Adrenal gland (tissue), 19 donors: ENCODE measurements at regions of chr2 and their contacts with region 1.

Region 1: DNA sequence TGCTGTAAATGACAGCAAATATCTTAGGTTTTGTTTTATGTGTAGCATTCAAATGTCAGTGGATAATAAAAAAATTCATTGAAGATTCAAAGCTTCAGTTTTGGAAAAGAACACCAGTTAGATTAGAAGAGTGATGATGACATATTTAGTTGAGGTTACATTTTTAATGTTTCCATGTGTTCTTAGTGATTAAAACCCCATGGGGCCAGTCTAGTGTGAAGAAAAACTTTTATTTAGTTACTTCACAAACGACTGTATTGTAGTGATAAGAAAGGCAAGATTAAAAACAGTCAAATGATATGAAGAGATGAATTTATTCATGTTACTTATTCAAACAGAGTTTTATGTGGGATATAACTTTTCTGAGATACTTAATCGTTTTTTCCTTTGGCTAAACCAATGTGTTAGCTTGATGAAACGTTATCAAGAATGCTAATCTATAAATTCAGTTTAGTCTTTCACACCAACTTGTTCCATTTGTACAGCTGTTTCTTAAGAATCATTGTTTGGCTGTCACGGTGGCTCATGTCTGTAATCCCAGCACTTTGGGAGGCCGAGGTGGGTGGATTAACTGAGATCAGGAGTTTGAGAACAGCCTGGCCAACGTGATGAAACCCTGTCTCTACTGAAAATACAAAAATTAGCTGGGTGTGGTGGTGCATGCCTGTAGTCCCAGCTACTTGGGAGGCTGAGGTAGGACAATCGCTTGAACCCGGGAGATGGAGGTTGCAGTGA is 11.6 kb downstream of the BMPR2 start:
- DNase-seq: no peak
- H3K4me3 ChIP-seq: no peak overlapping the region
- H3K27ac ChIP-seq: peak overlapping the region in 1 of 5 donors; percentile 12
- H3K4me1 ChIP-seq: peaks cover 8 to 36% of the 10 kb centered on the region in 2 donors
- H3K27me3 ChIP-seq: no peaks in the 10 kb centered on the region
- CTCF ChIP-seq: no peak
- POLR2A ChIP-seq: no peak

Region 2: DNA sequence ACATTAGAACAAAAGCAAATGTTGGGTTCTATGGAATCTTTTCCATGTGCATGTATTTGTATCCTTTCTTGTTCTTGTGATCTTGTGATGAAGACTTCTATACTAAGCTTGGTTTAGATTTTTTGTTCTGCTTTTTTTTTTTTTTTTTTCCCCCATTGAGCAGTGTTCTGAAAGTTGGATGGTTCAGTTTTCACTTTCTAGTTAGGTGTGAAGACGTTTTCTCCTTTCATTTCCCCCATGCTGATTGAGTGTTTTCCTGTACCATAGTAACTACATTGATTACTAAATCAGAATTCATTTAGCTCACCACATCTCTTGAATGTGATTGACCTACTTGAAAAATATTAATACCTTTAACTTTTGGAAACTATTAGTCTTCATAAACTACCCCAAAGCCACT is 88.1 kb before region 1 on chr2:
- intact Hi-C with region 1: no loop called
- DNase-seq: no peak
- H3K4me3 ChIP-seq: no peak overlapping the region
- H3K27ac ChIP-seq: no peak overlapping the region
- H3K4me1 ChIP-seq: no peaks in the 10 kb centered on the region
- H3K27me3 ChIP-seq: no peaks in the 10 kb centered on the region
- CTCF ChIP-seq: no peak
- POLR2A ChIP-seq: no peak

Region 3: DNA sequence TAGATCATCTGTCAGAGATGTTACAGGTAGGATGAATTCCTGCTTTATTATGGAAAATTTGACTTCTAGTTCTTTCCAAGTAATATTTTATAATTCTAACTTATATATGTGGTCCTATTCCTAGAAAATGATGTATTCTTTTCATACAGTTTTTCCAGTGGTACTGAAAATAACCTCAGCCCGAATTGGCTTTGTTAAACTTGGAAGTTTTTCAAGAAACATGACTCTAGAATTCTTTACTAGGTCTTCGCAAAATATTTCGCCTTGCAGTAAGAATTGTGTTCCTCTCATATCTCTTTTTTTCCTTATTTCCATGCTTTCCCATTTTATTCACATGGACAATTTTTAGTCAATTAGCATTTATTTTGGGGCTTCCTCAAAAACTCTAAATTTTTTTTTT is 48.9 kb after region 1 on chr2:
- intact Hi-C with region 1: loop called in 1 of 2 experiments (anchors 10 kb)
- DNase-seq: no peak
- H3K4me3 ChIP-seq: no peak overlapping the region
- H3K27ac ChIP-seq: peak overlapping the region in 2 of 5 donors; percentile 27 to 34
- H3K4me1 ChIP-seq: peaks cover 14 to 35% of the 10 kb centered on the region in 2 donors
- H3K27me3 ChIP-seq: no peaks in the 10 kb centered on the region
- CTCF ChIP-seq: no peak
- POLR2A ChIP-seq: no peak

Region 4: GRCh38 chr2:202450785-202451184 is 63.0 kb after region 1 on chr2:
- intact Hi-C with region 1: loop called in 1 of 2 experiments (anchors 10 kb)
- DNase-seq: peak in 2 of 7 donors; percentile 41 to 50
- H3K4me3 ChIP-seq: no peak overlapping the region
- H3K27ac ChIP-seq: peak overlapping the region; percentile 32 to 74 (median 64)
- H3K4me1 ChIP-seq: peaks cover 14 to 18% of the 10 kb centered on the region in 2 donors
- H3K27me3 ChIP-seq: no peaks in the 10 kb centered on the region
- CTCF ChIP-seq: no peak
- POLR2A ChIP-seq: no peak

Region 5: GRCh38 chr2:202479610-202480009 is 91.8 kb after region 1 on chr2:
- intact Hi-C with region 1: loop called in 1 of 2 experiments (anchors 10 kb)
- DNase-seq: no peak
- H3K4me3 ChIP-seq: no peak overlapping the region
- H3K27ac ChIP-seq: no peak overlapping the region
- H3K4me1 ChIP-seq: no peaks in the 10 kb centered on the region
- H3K27me3 ChIP-seq: no peaks in the 10 kb centered on the region
- CTCF ChIP-seq: no peak
- POLR2A ChIP-seq: no peak

Region 6: DNA sequence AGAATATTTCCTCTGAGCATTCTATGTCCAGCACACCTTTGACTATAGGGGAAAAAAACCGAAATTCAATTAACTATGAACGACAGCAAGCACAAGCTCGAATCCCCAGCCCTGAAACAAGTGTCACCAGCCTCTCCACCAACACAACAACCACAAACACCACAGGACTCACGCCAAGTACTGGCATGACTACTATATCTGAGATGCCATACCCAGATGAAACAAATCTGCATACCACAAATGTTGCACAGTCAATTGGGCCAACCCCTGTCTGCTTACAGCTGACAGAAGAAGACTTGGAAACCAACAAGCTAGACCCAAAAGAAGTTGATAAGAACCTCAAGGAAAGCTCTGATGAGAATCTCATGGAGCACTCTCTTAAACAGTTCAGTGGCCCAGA is 167.6 kb after region 1 on chr2:
- intact Hi-C with region 1: no loop called
- DNase-seq: no peak
- H3K4me3 ChIP-seq: no peak overlapping the region
- H3K27ac ChIP-seq: no peak overlapping the region
- H3K4me1 ChIP-seq: no peaks in the 10 kb centered on the region
- H3K27me3 ChIP-seq: no peaks in the 10 kb centered on the region
- CTCF ChIP-seq: no peak
- POLR2A ChIP-seq: no peak